ENCODE measurements at regions of chr11 and their contacts with region 1.

Region 1: GRCh38 chr11:61581030-61581928 is at the start of gene SYT7:
- DNase-seq: peak; percentile 79 to 99 (median 96)
- ATAC-seq: peak; percentile 92
- H3K4me3 ChIP-seq: peak within 1 kb of the TSS; percentile 50
- H3K4me3 Mint-ChIP-seq: peak within 1 kb of the TSS; percentile 76 to 90 (median 86)
- H3K27ac ChIP-seq: no peak within 1 kb of the TSS
- H3K27ac Mint-ChIP-seq: peak within 1 kb of the TSS; percentile 3 to 88 (median 51)
- H3K4me1 ChIP-seq: peaks cover 5 to 12% of the 10 kb centered on the region in 2 donors
- H3K4me1 Mint-ChIP-seq: peaks cover 8 to 17% (median 10%) of the 10 kb centered on the region in 7 donors
- H3K27me3 ChIP-seq: peaks cover 3 to 18% of the 10 kb centered on the region in 2 donors
- H3K27me3 Mint-ChIP-seq: peaks cover 25 to 64% (median 32%) of the 10 kb centered on the region in 5 donors
- total RNA-seq, gene SYT7: 0.08 to 0.44 TPM in 2 of 5 experiments, not detected in the others

Region 2: DNA sequence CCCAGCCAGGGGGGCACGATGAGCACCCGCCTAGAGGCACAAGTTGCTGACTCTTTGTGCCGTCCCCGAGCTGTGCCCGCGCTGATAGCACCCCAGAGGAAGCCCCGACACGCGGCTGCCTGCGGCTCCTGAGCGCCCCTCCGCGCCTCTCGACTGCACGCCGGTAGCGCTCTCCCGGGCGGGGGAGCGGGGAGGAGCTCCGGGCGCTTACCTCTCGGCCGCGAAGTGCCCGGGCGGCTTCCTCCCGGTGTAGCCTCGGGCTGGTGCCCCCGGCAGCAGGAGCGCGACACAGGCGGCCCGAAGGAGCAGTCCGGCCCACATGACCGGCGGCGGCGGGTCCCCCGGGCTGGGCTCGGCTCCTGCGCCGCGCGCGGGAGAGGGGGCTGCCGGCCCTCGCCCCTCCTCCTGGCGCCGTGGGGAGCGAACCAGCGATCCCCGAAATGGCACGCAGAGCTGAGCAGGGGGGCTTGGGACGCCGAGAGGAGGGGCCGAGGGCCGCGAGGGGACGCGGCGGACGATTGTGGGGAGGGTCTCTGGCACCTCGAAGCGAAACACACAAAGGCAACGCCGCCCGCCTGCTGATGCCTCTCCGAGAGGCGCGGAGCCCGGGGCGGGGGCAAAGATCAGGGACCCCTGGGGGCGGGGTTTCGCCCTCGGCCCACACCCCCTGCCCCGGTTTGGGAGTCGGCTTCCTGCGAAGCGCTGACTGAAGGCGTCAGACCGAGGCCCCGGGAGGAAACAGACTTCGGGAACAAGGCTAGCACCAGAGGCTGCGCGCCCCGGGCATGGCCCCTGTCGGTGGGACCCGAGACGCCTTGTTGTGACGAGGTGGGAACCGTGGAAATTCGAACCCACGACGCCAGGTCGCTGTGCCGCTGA is 286.3 kb before region 1 on chr11 and contains the start of gene VWCE:
- CTCF ChIA-PET with region 1: no interaction called
- POLR2A ChIA-PET with region 1: no interaction called
- intact Hi-C with region 1: no loop called
- DNase-seq: peak; percentile 35 to 78 (median 57)
- ATAC-seq: peak; percentile 92
- H3K4me3 ChIP-seq: peak within 1 kb of the TSS; percentile 73
- H3K4me3 Mint-ChIP-seq: peak within 1 kb of the TSS; percentile 72 to 86 (median 80)
- H3K27ac ChIP-seq: no peak within 1 kb of the TSS
- H3K27ac Mint-ChIP-seq: peak within 1 kb of the TSS in 1 of 9 donors; percentile 46
- H3K4me1 ChIP-seq: no peaks in the 10 kb centered on the region
- H3K4me1 Mint-ChIP-seq: peaks cover 15 to 40% (median 39%) of the 10 kb centered on the region in 7 donors
- H3K27me3 ChIP-seq: no peaks in the 10 kb centered on the region
- H3K27me3 Mint-ChIP-seq: peaks cover 0 to 25% (median 9%) of the 10 kb centered on the region in 5 donors
- total RNA-seq, gene VWCE: 0.16 to 3.8 (median 0.49) TPM

Region 3: GRCh38 chr11:61509043-61510029 is 71.9 kb before region 1 on chr11:
- CTCF ChIA-PET with region 1: no interaction called
- POLR2A ChIA-PET with region 1: no interaction called
- intact Hi-C with region 1: loop called in 1 of 2 experiments (anchors 2 kb)
- DNase-seq: peak in 8 of 9 donors; percentile 23 to 76 (median 44)
- ATAC-seq: peak; percentile 83
- H3K4me3 ChIP-seq: peak overlapping the region; percentile 39
- H3K4me3 Mint-ChIP-seq: peak overlapping the region in 8 of 10 donors; percentile 14 to 82 (median 43)
- H3K27ac ChIP-seq: no peak overlapping the region
- H3K27ac Mint-ChIP-seq: no peak overlapping the region
- H3K4me1 ChIP-seq: peaks cover 0 to 8% of the 10 kb centered on the region in 2 donors
- H3K4me1 Mint-ChIP-seq: peaks cover 0 to 13% (median 7%) of the 10 kb centered on the region in 7 donors
- H3K27me3 ChIP-seq: peaks cover 2 to 21% of the 10 kb centered on the region in 2 donors
- H3K27me3 Mint-ChIP-seq: peaks cover 27 to 66% (median 57%) of the 10 kb centered on the region in 5 donors

Region 4: GRCh38 chr11:61532139-61533038 is 48.9 kb before region 1 on chr11:
- CTCF ChIA-PET with region 1: interaction called, 3 read pairs
- POLR2A ChIA-PET with region 1: no interaction called
- intact Hi-C with region 1: loop called in 1 of 2 experiments (anchors 1 kb)
- DNase-seq: peak; percentile 12 to 48 (median 32)
- ATAC-seq: peak; percentile 67
- H3K4me3 ChIP-seq: no peak overlapping the region
- H3K4me3 Mint-ChIP-seq: no peak overlapping the region
- H3K27ac ChIP-seq: no peak overlapping the region
- H3K27ac Mint-ChIP-seq: no peak overlapping the region
- H3K4me1 ChIP-seq: no peaks in the 10 kb centered on the region
- H3K4me1 Mint-ChIP-seq: no peaks in the 10 kb centered on the region
- H3K27me3 ChIP-seq: no peaks in the 10 kb centered on the region
- H3K27me3 Mint-ChIP-seq: peaks cover 2 to 21% (median 10%) of the 10 kb centered on the region in 5 donors

Region 5: GRCh38 chr11:61567286-61568061 is 13.8 kb before region 1 on chr11:
- CTCF ChIA-PET with region 1: no interaction called
- POLR2A ChIA-PET with region 1: no interaction called
- intact Hi-C with region 1: loop called in 1 of 2 experiments (anchors 1 kb)
- DNase-seq: peak; percentile 50 to 77 (median 67)
- ATAC-seq: peak; percentile 92
- H3K4me3 ChIP-seq: no peak overlapping the region
- H3K4me3 Mint-ChIP-seq: no peak overlapping the region
- H3K27ac ChIP-seq: no peak overlapping the region
- H3K27ac Mint-ChIP-seq: peak overlapping the region in 2 of 9 donors; percentile 66 to 81
- H3K4me1 ChIP-seq: no peaks in the 10 kb centered on the region
- H3K4me1 Mint-ChIP-seq: peaks cover 0 to 7% (median 0%) of the 10 kb centered on the region in 7 donors
- H3K27me3 ChIP-seq: peaks cover 0 to 10% of the 10 kb centered on the region in 2 donors
- H3K27me3 Mint-ChIP-seq: peaks cover 21 to 84% (median 67%) of the 10 kb centered on the region in 5 donors

Region 6: DNA sequence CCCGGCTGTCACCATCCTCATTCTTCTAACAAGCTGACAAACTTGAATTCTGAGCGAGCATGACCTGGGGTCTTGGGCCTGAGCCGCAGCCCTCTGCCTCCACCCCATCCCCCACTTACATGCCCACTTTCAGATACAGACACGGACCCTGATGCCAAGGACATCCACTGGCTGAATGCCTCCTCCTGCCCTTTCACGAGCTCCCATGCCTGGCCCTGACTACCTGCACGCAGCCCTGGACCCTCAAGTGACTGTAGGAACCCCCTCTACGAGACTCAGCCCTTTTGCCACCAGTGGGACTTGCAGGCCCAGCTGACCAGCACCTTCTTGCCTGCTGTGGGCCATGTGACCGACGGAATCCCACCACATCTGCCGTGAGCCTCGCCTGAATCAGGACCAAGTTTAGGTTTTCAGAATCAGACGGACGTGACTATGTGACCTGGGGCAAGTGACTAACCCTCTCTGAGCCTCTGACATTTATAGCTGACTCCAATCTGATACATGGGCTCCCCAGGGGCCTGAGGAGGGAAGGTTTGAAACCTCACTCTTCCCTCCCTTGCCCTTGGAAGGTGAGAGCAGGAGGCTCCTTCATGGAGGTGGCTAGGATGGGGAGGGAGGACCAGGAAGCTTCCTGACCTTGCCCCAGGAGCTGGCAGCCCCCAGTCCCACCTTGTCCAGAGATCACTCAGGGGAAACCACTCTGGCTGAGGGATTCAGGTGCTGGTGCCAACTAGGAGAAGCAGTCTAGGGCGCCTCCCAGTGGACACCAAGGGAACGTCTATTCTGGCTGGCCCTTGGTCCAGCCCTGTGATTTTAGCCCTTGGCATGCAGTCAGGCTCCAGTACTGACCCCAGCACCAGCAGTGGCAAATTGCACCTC is 46.5 kb after region 1 on chr11:
- CTCF ChIA-PET with region 1: no interaction called
- POLR2A ChIA-PET with region 1: no interaction called
- intact Hi-C with region 1: no loop called
- DNase-seq: peak in 3 of 9 donors; percentile 4 to 41 (median 13)
- ATAC-seq: peak; percentile 50
- H3K4me3 ChIP-seq: no peak overlapping the region
- H3K4me3 Mint-ChIP-seq: no peak overlapping the region
- H3K27ac ChIP-seq: no peak overlapping the region
- H3K27ac Mint-ChIP-seq: no peak overlapping the region
- H3K4me1 ChIP-seq: no peaks in the 10 kb centered on the region
- H3K4me1 Mint-ChIP-seq: peaks cover 0 to 6% (median 0%) of the 10 kb centered on the region in 7 donors
- H3K27me3 ChIP-seq: no peaks in the 10 kb centered on the region
- H3K27me3 Mint-ChIP-seq: peaks cover 0 to 16% (median 0%) of the 10 kb centered on the region in 5 donors

Region 7: GRCh38 chr11:61679893-61680621 is 98.8 kb after region 1 on chr11 and contains the start of gene DAGLA:
- CTCF ChIA-PET with region 1: no interaction called
- POLR2A ChIA-PET with region 1: no interaction called
- intact Hi-C with region 1: loop called in 1 of 2 experiments (anchors 10 kb)
- DNase-seq: peak; percentile 60 to 91 (median 74)
- ATAC-seq: peak; percentile 89
- H3K4me3 ChIP-seq: no peak within 1 kb of the TSS
- H3K4me3 Mint-ChIP-seq: peak within 1 kb of the TSS in 9 of 10 donors; percentile 38 to 77 (median 67)
- H3K27ac ChIP-seq: no peak within 1 kb of the TSS
- H3K27ac Mint-ChIP-seq: peak within 1 kb of the TSS in 4 of 9 donors; percentile 43 to 65 (median 55)
- H3K4me1 ChIP-seq: peaks cover 14 to 16% of the 10 kb centered on the region in 2 donors
- H3K4me1 Mint-ChIP-seq: peaks cover 0 to 9% (median 5%) of the 10 kb centered on the region in 7 donors
- H3K27me3 ChIP-seq: peaks cover 0 to 3% of the 10 kb centered on the region in 2 donors
- H3K27me3 Mint-ChIP-seq: peaks cover 2 to 27% (median 21%) of the 10 kb centered on the region in 5 donors
- total RNA-seq, gene DAGLA: 0.15 to 2.1 (median 0.35) TPM